Activated naive CD4-positive, alpha-beta T cell treated with anti-CD3 and anti-CD28 coated beads for 36 hours (primary cell): ENCODE measurements at regions of chr4 and their contacts with region 1.

Region 1: DNA sequence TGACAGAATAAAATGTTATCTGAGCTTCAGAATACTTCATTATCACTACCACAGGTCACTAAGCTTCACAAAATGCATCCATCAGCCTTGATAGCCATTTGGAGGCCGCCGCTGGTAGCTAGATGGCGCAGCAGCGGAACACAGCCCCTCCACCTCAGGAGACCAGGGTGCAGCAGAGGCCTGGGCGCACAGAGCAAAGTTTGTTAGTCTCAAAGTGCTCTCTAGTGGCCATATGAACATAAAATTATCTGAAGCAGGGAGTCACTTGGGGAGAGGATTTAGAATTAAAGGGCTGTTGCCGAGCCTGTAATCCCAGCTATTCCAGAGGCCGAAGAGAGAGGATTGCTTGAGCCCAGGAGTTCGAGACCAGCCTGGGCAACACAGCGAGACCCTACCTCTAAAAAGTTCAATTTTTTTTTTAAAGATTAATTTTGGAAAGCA is 8.1 kb upstream of the DCTD start:
- DNase-seq: peak; percentile 80
- H3K4me3 Mint-ChIP-seq: no peak overlapping the region
- H3K27ac Mint-ChIP-seq: no peak overlapping the region
- H3K4me1 Mint-ChIP-seq: peaks cover 2% of the 10 kb centered on the region
- H3K27me3 Mint-ChIP-seq: peaks cover 4% of the 10 kb centered on the region

Region 2: DNA sequence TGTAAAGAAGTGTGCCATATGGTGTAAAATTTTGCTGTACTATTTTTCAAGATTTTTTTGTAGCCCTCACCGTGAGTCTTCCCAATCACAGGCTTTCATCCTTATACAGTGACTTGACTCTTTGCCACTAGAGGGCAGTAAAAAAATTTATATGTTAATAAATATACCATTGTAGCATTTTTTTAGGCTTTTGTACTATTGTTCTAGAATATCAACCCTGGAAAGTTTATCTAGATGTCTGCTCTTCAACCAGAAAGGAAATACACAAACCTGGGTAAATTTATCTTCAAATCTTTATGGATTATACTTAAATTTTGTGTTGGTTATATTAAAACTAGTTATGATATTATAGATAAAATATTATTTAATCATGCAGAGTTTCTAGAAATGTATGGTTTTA is 446.8 kb before region 1 on chr4:
- CTCF ChIA-PET with region 1: interaction called, 5 read pairs
- intact Hi-C with region 1: loop called (anchors 1 kb)
- DNase-seq: no peak
- H3K4me3 Mint-ChIP-seq: no peak overlapping the region
- H3K27ac Mint-ChIP-seq: no peak overlapping the region
- H3K4me1 Mint-ChIP-seq: no peaks in the 10 kb centered on the region
- H3K27me3 Mint-ChIP-seq: peaks cover 14% of the 10 kb centered on the region